Right ventricle myocardium inferior (tissue), 1 donor: ENCODE measurements at regions of chr12 and their contacts with region 1.

Region 1: GRCh38 chr12:42568952-42569915 is 20.3 kb downstream of the PRICKLE1 start:
- DNase-seq: no peak
- ATAC-seq: peak; percentile 71

Region 2: GRCh38 chr12:42382013-42382680 is 187.1 kb before region 1 on chr12:
- intact Hi-C with region 1: loop called (anchors 10 kb)
- DNase-seq: no peak
- ATAC-seq: no peak

Region 3: GRCh38 chr12:42716491-42716891 is 147.3 kb after region 1 on chr12:
- intact Hi-C with region 1: no loop called
- DNase-seq: no peak
- ATAC-seq: peak; percentile 74